OCI-LY7 (cell line): ENCODE measurements at regions of chr5 and their contacts with region 1.

Region 1: GRCh38 chr5:105726093-105726492 is 1944.6 kb downstream of the EFNA5 start:
- DNase-seq: no peak
- H3K4me3 ChIP-seq: no peak overlapping the region
- H3K27ac ChIP-seq: no peak overlapping the region
- H3K4me1 ChIP-seq: no peaks in the 10 kb centered on the region
- CTCF ChIP-seq: no peak

Region 2: GRCh38 chr5:104734046-104734445 is 992.0 kb before region 1 on chr5:
- CTCF ChIA-PET with region 1: no interaction called
- POLR2A ChIA-PET with region 1: no interaction called
- intact Hi-C with region 1: loop called (anchors 5 kb)
- DNase-seq: no peak
- H3K4me3 ChIP-seq: no peak overlapping the region
- H3K27ac ChIP-seq: no peak overlapping the region
- H3K4me1 ChIP-seq: no peaks in the 10 kb centered on the region
- CTCF ChIP-seq: no peak

Region 3: GRCh38 chr5:106171708-106172107 is 445.6 kb after region 1 on chr5:
- CTCF ChIA-PET with region 1: no interaction called
- POLR2A ChIA-PET with region 1: no interaction called
- intact Hi-C with region 1: no loop called
- DNase-seq: no peak
- H3K4me3 ChIP-seq: no peak overlapping the region
- H3K27ac ChIP-seq: no peak overlapping the region
- H3K4me1 ChIP-seq: no peaks in the 10 kb centered on the region
- CTCF ChIP-seq: no peak